Activated naive CD4-positive, alpha-beta T cell treated with anti-CD3 and anti-CD28 coated beads for 36 hours (primary cell): ENCODE measurements at regions of chr11 and their contacts with region 1.

Region 1: DNA sequence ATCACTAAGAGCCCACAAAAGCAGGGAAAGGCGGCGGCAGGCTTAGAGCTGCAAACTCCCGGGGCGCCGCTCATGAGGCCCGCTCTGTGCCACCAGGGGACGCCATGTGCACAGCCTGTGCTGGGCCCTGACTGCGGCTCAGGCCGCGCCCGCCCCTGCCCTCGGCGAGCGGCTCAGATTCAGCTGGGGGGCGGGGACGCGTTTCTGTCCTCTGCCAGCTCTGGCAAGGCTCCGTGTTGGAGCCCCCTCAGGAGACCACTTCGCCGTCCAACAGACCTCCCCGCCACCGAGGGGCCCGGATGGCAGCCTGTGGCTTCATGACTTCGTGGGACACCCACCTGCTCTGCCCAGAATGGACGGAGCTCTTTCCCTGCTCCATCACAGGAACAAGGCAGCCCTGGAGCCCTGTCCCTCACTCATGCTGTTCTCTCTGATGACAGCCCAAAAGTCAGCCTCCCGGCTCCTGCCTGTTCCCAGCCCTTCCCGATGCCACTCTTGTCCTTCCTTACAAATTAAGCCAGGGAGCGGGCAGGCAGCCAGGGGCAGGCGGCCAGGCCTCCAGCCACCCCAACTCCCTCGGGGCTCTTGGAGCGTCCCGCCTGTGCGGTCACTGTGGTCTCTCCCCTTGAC is 69.1 kb downstream of the NAT10 start:
- DNase-seq: peak; percentile 88
- H3K4me3 Mint-ChIP-seq: peak overlapping the region; percentile 41
- H3K27ac Mint-ChIP-seq: no peak overlapping the region
- H3K4me1 Mint-ChIP-seq: peaks cover 21% of the 10 kb centered on the region
- H3K27me3 Mint-ChIP-seq: no peaks in the 10 kb centered on the region

Region 2: GRCh38 chr11:33996498-33997454 is 177.8 kb before region 1 on chr11:
- CTCF ChIA-PET with region 1: interaction called, 6 read pairs
- intact Hi-C with region 1: loop called (anchors 1 kb)
- DNase-seq: peak; percentile 87
- H3K4me3 Mint-ChIP-seq: no peak overlapping the region
- H3K27ac Mint-ChIP-seq: no peak overlapping the region
- H3K4me1 Mint-ChIP-seq: peaks cover 13% of the 10 kb centered on the region
- H3K27me3 Mint-ChIP-seq: peaks cover 12% of the 10 kb centered on the region

Region 3: GRCh38 chr11:34214961-34215805 is 40.7 kb after region 1 on chr11:
- CTCF ChIA-PET with region 1: interaction called, 9 read pairs
- intact Hi-C with region 1: loop called (anchors 2 kb)
- DNase-seq: peak; percentile 96
- H3K4me3 Mint-ChIP-seq: peak overlapping the region; percentile 28
- H3K27ac Mint-ChIP-seq: peak overlapping the region; percentile 83
- H3K4me1 Mint-ChIP-seq: peaks cover 29% of the 10 kb centered on the region
- H3K27me3 Mint-ChIP-seq: no peaks in the 10 kb centered on the region

Region 4: GRCh38 chr11:34344768-34345539 is 170.4 kb after region 1 on chr11:
- CTCF ChIA-PET with region 1: interaction called, 13 read pairs
- intact Hi-C with region 1: no loop called
- DNase-seq: no peak
- H3K4me3 Mint-ChIP-seq: no peak overlapping the region
- H3K27ac Mint-ChIP-seq: no peak overlapping the region
- H3K4me1 Mint-ChIP-seq: no peaks in the 10 kb centered on the region
- H3K27me3 Mint-ChIP-seq: no peaks in the 10 kb centered on the region

Region 5: DNA sequence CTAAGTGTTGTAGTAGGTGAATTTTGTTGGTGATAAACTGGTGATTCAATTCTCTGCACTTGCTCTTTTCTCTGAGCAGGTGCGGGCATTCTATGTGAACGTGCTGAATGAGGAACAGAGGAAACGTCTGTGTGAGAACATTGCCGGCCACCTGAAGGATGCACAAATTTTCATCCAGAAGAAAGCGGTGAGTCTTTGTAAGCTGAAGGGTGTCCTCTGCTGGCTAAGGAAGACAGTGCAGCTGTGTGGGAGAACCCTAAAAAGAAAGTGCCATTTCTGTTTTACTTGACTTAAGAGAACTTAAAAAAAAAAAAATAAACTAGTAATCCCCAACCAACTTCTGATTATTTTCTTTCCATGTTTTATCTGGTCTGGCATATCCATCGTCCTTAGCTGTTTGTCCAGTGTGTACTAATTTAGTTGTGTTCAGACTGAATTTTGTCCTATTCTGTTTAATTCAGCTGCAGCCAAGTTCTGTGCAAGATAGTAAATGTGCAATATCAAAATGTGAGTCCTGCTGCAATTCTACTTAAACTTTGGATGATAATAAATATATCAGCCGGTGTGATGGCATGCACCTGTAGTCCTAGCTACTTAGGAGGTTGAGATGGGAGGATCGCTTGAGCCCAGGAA is 293.8 kb after region 1 on chr11:
- CTCF ChIA-PET with region 1: interaction called, 9 read pairs
- intact Hi-C with region 1: loop called (anchors 1 kb)
- DNase-seq: peak; percentile 78
- H3K4me3 Mint-ChIP-seq: no peak overlapping the region
- H3K27ac Mint-ChIP-seq: no peak overlapping the region
- H3K4me1 Mint-ChIP-seq: no peaks in the 10 kb centered on the region
- H3K27me3 Mint-ChIP-seq: no peaks in the 10 kb centered on the region